ENCODE measurements at regions of chr11 and their contacts with region 1.

Region 1: DNA sequence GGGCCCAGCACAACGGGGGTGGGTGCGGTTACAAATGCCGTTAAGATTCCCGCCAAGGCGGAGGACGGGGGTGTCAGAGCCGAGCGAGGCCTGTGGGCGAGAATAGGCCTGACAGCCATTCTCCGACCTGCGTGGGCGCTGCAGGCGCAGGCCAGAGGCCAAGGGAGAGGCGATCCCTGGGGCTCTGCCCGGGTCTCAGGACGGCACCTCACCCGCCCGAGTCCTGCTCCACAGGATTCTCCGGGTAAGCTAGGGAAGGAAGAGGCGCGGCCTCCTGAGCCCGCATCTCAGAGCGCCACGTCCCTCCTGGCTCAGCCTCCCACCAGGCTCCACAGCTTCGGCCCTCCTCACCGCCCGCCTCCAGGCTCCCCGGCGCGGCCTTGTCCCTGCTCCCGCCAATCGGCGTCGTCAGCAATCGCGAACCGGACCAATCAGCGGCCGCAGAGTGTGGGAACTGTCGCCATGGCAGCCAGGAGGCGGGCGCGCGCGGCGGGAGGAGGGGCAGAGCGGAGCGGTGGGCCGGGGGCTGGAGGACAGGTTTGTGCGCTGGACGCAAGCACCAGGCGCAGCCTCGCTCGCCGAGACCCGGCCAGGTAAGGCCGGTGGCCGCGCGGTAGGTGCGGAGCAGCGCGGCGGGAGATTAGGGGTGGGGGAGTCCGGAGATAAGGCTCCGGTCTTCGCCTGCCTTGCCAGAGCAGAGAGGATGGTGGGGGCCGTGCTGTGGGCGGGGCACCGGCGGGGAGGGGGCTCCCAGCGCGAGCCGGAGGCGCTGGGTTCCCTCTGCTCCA is at the start of gene NUCB2:
- DNase-seq: peak; percentile 92 to 97 (median 95)
- ATAC-seq: peak; percentile 93
- H3K4me3 ChIP-seq: peak within 1 kb of the TSS; percentile 84
- H3K4me3 Mint-ChIP-seq: peak within 1 kb of the TSS; percentile 87
- H3K27ac ChIP-seq: peak within 1 kb of the TSS; percentile 80 to 87
- H3K27ac Mint-ChIP-seq: peak within 1 kb of the TSS; percentile 86
- H3K4me1 ChIP-seq: peaks cover 42% of the 10 kb centered on the region
- H3K4me1 Mint-ChIP-seq: peaks cover 35% of the 10 kb centered on the region
- H3K27me3 ChIP-seq: no peaks in the 10 kb centered on the region
- H3K27me3 Mint-ChIP-seq: no peaks in the 10 kb centered on the region
- CTCF ChIP-seq: no peak
- total RNA-seq, gene NUCB2: 65.2 to 73.0 TPM

Region 2: GRCh38 chr11:17077520-17078401 is 198.7 kb before region 1 on chr11 and contains the start of gene RPS13:
- CTCF ChIA-PET with region 1: no interaction called
- POLR2A ChIA-PET with region 1: interaction called, 13 read pairs
- intact Hi-C with region 1: loop called (anchors 5 kb)
- DNase-seq: peak; percentile 88 to 99 (median 92)
- ATAC-seq: peak; percentile 92
- H3K4me3 ChIP-seq: peak within 1 kb of the TSS; percentile 94
- H3K4me3 Mint-ChIP-seq: peak within 1 kb of the TSS; percentile 92
- H3K27ac ChIP-seq: peak within 1 kb of the TSS; percentile 93 to 94
- H3K27ac Mint-ChIP-seq: peak within 1 kb of the TSS; percentile 95
- H3K4me1 ChIP-seq: peaks cover 28% of the 10 kb centered on the region
- H3K4me1 Mint-ChIP-seq: peaks cover 45% of the 10 kb centered on the region
- H3K27me3 ChIP-seq: no peaks in the 10 kb centered on the region
- H3K27me3 Mint-ChIP-seq: no peaks in the 10 kb centered on the region
- CTCF ChIP-seq: no peak
- total RNA-seq, gene RPS13: 2,215 to 2,217 TPM

Region 3: DNA sequence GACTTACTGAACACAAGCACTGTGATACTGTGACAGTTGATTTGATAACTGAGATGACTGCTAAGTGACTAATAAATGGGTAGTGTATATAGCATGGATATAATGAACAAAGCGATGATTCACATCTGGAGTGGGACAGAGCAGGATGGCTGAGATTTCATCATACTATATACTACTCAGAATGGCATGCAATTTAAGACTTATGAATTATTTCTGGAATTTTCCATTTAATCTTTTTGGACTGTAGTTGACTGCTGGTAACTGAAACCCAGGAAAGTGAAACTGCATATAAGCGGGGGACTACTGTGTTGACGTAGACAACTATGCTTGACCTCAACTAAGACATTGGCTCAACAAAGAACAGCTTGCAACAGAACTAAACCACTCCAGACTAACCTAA is 19.9 kb before region 1 on chr11:
- CTCF ChIA-PET with region 1: no interaction called
- POLR2A ChIA-PET with region 1: interaction called, 10 read pairs
- intact Hi-C with region 1: no loop called
- DNase-seq: no peak
- ATAC-seq: no peak
- H3K4me3 ChIP-seq: no peak overlapping the region
- H3K4me3 Mint-ChIP-seq: no peak overlapping the region
- H3K27ac ChIP-seq: no peak overlapping the region
- H3K27ac Mint-ChIP-seq: no peak overlapping the region
- H3K4me1 ChIP-seq: no peaks in the 10 kb centered on the region
- H3K4me1 Mint-ChIP-seq: no peaks in the 10 kb centered on the region
- H3K27me3 ChIP-seq: no peaks in the 10 kb centered on the region
- H3K27me3 Mint-ChIP-seq: no peaks in the 10 kb centered on the region
- CTCF ChIP-seq: no peak

Region 4: DNA sequence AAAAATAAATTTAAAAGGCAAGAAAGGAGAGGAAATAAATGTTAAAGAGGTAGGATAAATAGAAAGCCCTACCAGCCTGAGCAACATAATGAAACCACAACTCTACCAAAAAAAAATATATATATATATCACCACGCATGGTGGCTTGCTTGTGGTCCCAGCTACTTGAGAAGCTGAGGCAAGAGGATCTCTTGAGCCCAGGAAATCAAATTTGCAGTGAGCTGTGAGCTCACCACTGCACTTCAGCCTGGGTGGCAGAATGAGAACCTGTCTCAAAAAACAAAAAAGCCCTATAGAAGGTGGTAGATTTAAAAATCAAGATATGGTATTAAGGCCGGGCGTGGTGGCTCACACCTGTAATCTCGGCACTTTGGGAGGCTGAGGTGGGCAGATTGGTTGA is 10.6 kb after region 1 on chr11:
- CTCF ChIA-PET with region 1: no interaction called
- POLR2A ChIA-PET with region 1: interaction called, 61 read pairs
- intact Hi-C with region 1: loop called in 1 of 2 experiments (anchors 1 kb)
- DNase-seq: peak in 3 of 14 experiments; percentile 21 to 47 (median 22)
- ATAC-seq: no peak
- H3K4me3 ChIP-seq: no peak overlapping the region
- H3K4me3 Mint-ChIP-seq: peak overlapping the region; percentile 20
- H3K27ac ChIP-seq: no peak overlapping the region
- H3K27ac Mint-ChIP-seq: peak overlapping the region; percentile 67
- H3K4me1 ChIP-seq: peaks cover 31% of the 10 kb centered on the region
- H3K4me1 Mint-ChIP-seq: peaks cover 57% of the 10 kb centered on the region
- H3K27me3 ChIP-seq: no peaks in the 10 kb centered on the region
- H3K27me3 Mint-ChIP-seq: no peaks in the 10 kb centered on the region
- CTCF ChIP-seq: no peak

Region 5: DNA sequence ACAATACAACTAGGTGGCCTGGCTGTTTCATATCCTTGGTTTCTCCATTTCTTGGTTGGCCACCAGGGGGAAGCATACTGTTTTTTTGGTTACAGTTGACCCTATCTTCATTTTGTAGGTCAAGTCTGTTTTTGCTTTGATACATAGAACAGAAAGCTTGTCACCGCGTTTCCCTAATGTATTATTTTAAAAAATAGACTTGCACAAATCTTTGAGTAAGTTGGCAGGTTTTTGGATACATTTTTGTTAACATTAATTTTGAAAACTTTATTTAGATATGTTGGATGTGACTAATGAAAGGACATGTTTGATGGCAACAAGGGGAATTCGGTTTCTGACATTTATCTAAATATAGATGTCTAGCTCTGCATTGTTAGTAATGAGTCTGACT is 78.2 kb after region 1 on chr11:
- CTCF ChIA-PET with region 1: interaction called, 4 read pairs
- POLR2A ChIA-PET with region 1: interaction called, 14 read pairs
- intact Hi-C with region 1: loop called (anchors 2 to 5 kb)
- DNase-seq: peak; percentile 13 to 81 (median 38)
- ATAC-seq: peak; percentile 15
- H3K4me3 ChIP-seq: no peak overlapping the region
- H3K4me3 Mint-ChIP-seq: peak overlapping the region; percentile 93
- H3K27ac ChIP-seq: no peak overlapping the region
- H3K27ac Mint-ChIP-seq: peak overlapping the region; percentile 72
- H3K4me1 ChIP-seq: peaks cover 21% of the 10 kb centered on the region
- H3K4me1 Mint-ChIP-seq: peaks cover 35% of the 10 kb centered on the region
- H3K27me3 ChIP-seq: no peaks in the 10 kb centered on the region
- H3K27me3 Mint-ChIP-seq: no peaks in the 10 kb centered on the region
- CTCF ChIP-seq: peak; percentile 82

Region 6: DNA sequence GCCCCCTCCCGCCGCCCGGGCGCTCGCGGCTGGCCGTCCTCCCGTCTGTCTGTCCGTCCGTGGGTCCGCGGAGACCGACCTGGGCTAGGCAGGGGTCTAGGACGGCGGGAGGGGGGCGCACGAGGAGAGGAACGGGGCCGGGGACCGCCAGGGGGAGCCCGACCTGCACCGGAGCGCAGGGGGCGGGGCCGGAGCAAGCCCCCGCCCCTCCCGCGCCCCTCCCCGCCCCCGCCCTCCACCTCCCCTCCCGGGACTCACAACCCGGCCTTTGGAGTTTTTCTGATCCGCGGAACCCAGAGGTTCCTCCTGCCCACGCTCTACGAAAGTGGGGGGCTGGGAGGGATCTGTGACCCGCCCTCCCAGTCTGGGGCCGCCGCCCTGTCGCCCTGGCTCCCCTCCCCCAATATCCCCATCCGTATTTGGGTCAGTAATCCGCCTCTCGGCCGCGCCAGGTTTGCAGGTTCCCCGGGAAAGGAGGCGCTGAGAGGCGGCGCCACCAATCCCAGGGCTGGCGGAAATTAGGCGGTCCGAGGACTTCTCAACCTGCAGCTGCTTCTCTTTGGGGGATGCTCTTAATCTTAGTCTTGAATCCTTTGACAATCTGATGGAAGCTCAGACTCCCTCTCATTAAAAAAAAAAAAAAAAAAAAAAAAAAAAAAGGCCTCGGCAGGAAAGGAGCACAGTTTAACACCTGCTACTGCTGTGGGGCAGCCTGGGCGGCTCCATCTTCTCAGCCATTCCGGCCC is 113.0 kb after region 1 on chr11:
- CTCF ChIA-PET with region 1: interaction called, 3 read pairs
- POLR2A ChIA-PET with region 1: interaction called, 6 read pairs
- intact Hi-C with region 1: loop called in 1 of 2 experiments (anchors 5 kb)
- DNase-seq: peak; percentile 69 to 91 (median 77)
- ATAC-seq: peak; percentile 88
- H3K4me3 ChIP-seq: peak overlapping the region; percentile 62
- H3K4me3 Mint-ChIP-seq: peak overlapping the region; percentile 93
- H3K27ac ChIP-seq: no peak overlapping the region
- H3K27ac Mint-ChIP-seq: peak overlapping the region; percentile 58
- H3K4me1 ChIP-seq: peaks cover 15% of the 10 kb centered on the region
- H3K4me1 Mint-ChIP-seq: no peaks in the 10 kb centered on the region
- H3K27me3 ChIP-seq: no peaks in the 10 kb centered on the region
- H3K27me3 Mint-ChIP-seq: no peaks in the 10 kb centered on the region
- CTCF ChIP-seq: peak; percentile 79